Heart right ventricle (tissue), 16 donors: ENCODE measurements at regions of chr3 and their contacts with region 1.

Region 1: DNA sequence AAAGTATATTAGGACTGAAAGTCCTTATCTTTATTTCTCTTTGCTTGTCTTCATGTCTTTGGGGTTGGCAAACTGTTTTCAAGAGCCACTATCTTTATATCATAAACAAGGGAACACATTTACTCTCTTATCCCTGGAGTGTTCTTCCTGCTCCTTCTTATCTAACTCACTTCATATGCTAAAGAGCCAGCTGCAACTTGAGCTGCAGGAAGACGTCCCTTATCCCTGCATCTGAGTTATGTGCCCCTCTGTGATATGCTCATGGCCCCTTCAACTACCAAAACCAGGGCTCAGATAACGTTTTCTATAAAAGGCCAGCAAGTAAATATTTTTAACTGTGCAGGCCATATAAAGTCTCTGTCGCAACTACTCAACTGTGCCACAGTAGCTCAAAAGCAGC is 137.0 kb upstream of the CRBN start:
- DNase-seq: no peak
- ATAC-seq: no peak
- H3K4me3 ChIP-seq: no peak overlapping the region
- H3K27ac ChIP-seq: no peak overlapping the region
- H3K4me1 ChIP-seq: no peaks in the 10 kb centered on the region
- H3K27me3 ChIP-seq: no peaks in the 10 kb centered on the region
- CTCF ChIP-seq: no peak

Region 2: DNA sequence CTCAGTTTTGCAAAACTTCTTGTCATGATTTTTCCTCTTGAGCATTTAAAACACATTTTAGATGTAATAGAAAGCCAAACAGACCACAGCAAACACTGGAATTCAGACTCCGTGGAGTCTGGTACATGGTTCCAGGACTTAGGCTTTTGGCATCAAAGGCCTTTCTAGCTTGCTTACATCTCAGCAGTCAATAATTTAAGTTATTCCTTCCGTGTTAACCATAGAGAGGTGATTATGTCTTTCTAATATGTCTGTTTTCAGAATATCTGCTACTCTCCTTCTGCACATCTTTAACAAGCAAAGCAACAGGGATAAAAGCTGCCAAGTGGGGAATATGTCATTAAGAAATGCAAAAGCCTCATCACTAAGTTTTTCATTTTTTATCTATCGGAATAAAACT is 34.7 kb after region 1 on chr3:
- intact Hi-C with region 1: loop called in 1 of 10 experiments (anchors 1 kb)
- DNase-seq: no peak
- ATAC-seq: no peak
- H3K4me3 ChIP-seq: no peak overlapping the region
- H3K27ac ChIP-seq: no peak overlapping the region
- H3K4me1 ChIP-seq: no peaks in the 10 kb centered on the region
- H3K27me3 ChIP-seq: no peaks in the 10 kb centered on the region
- CTCF ChIP-seq: no peak